B cell (primary cell): ENCODE measurements at regions of chr11 and their contacts with region 1.

Region 1: GRCh38 chr11:36306888-36307287 is 10.8 kb downstream of the PRR5L start:
- DNase-seq: peak; percentile 25
- ATAC-seq: no peak
- H3K4me3 ChIP-seq: no peak overlapping the region
- H3K4me3 Mint-ChIP-seq: no peak overlapping the region
- H3K27ac ChIP-seq: no peak overlapping the region
- H3K27ac Mint-ChIP-seq: no peak overlapping the region
- H3K4me1 ChIP-seq: no peaks in the 10 kb centered on the region
- H3K4me1 Mint-ChIP-seq: no peaks in the 10 kb centered on the region
- H3K27me3 ChIP-seq: no peaks in the 10 kb centered on the region
- H3K27me3 Mint-ChIP-seq: peaks cover 25% of the 10 kb centered on the region
- CTCF ChIP-seq: peak; percentile 60

Region 2: GRCh38 chr11:36142439-36142838 is 164.4 kb before region 1 on chr11:
- CTCF ChIA-PET with region 1: no interaction called
- POLR2A ChIA-PET with region 1: no interaction called
- intact Hi-C with region 1: no loop called
- DNase-seq: no peak
- ATAC-seq: no peak
- H3K4me3 ChIP-seq: no peak overlapping the region
- H3K4me3 Mint-ChIP-seq: no peak overlapping the region
- H3K27ac ChIP-seq: no peak overlapping the region
- H3K27ac Mint-ChIP-seq: no peak overlapping the region
- H3K4me1 ChIP-seq: no peaks in the 10 kb centered on the region
- H3K4me1 Mint-ChIP-seq: no peaks in the 10 kb centered on the region
- H3K27me3 ChIP-seq: no peaks in the 10 kb centered on the region
- H3K27me3 Mint-ChIP-seq: peaks cover 5% of the 10 kb centered on the region
- CTCF ChIP-seq: no peak

Region 3: GRCh38 chr11:36265793-36266628 is 40.9 kb before region 1 on chr11:
- CTCF ChIA-PET with region 1: no interaction called
- POLR2A ChIA-PET with region 1: no interaction called
- intact Hi-C with region 1: no loop called
- DNase-seq: peak; percentile 67
- ATAC-seq: peak; percentile 51
- H3K4me3 ChIP-seq: no peak overlapping the region
- H3K4me3 Mint-ChIP-seq: no peak overlapping the region
- H3K27ac ChIP-seq: no peak overlapping the region
- H3K27ac Mint-ChIP-seq: no peak overlapping the region
- H3K4me1 ChIP-seq: no peaks in the 10 kb centered on the region
- H3K4me1 Mint-ChIP-seq: no peaks in the 10 kb centered on the region
- H3K27me3 ChIP-seq: peaks cover 0 to 4% (median 0%) of the 10 kb centered on the region in 4 experiments
- H3K27me3 Mint-ChIP-seq: peaks cover 11% of the 10 kb centered on the region
- CTCF ChIP-seq: peak; percentile 80

Region 4: GRCh38 chr11:36672813-36673450 is 366.0 kb after region 1 on chr11:
- CTCF ChIA-PET with region 1: no interaction called
- POLR2A ChIA-PET with region 1: no interaction called
- intact Hi-C with region 1: loop called (anchors 5 kb)
- DNase-seq: peak; percentile 57
- ATAC-seq: no peak
- H3K4me3 ChIP-seq: no peak overlapping the region
- H3K4me3 Mint-ChIP-seq: no peak overlapping the region
- H3K27ac ChIP-seq: no peak overlapping the region
- H3K27ac Mint-ChIP-seq: no peak overlapping the region
- H3K4me1 ChIP-seq: no peaks in the 10 kb centered on the region
- H3K4me1 Mint-ChIP-seq: no peaks in the 10 kb centered on the region
- H3K27me3 ChIP-seq: no peaks in the 10 kb centered on the region
- H3K27me3 Mint-ChIP-seq: peaks cover 4% of the 10 kb centered on the region
- CTCF ChIP-seq: peak; percentile 97